Prostate gland (tissue), 2 donors: ENCODE measurements at regions of chr1 and their contacts with region 1.

Region 1: GRCh38 chr1:96538111-96538641 is 183.4 kb upstream of the PTBP2 start:
- DNase-seq: no peak
- H3K4me3 ChIP-seq: no peak overlapping the region
- H3K27ac ChIP-seq: peak overlapping the region; percentile 12 to 58
- H3K4me1 ChIP-seq: no peaks in the 10 kb centered on the region
- H3K27me3 ChIP-seq: no peaks in the 10 kb centered on the region
- CTCF ChIP-seq: no peak
- POLR2A ChIP-seq: no peak

Region 2: GRCh38 chr1:96145492-96145891 is 392.7 kb before region 1 on chr1:
- intact Hi-C with region 1: no loop called
- DNase-seq: no peak
- H3K4me3 ChIP-seq: no peak overlapping the region
- H3K27ac ChIP-seq: no peak overlapping the region
- H3K4me1 ChIP-seq: no peaks in the 10 kb centered on the region
- H3K27me3 ChIP-seq: no peaks in the 10 kb centered on the region
- CTCF ChIP-seq: no peak
- POLR2A ChIP-seq: no peak

Region 3: GRCh38 chr1:96157101-96157500 is 381.1 kb before region 1 on chr1:
- intact Hi-C with region 1: no loop called
- DNase-seq: no peak
- H3K4me3 ChIP-seq: no peak overlapping the region
- H3K27ac ChIP-seq: no peak overlapping the region
- H3K4me1 ChIP-seq: no peaks in the 10 kb centered on the region
- H3K27me3 ChIP-seq: no peaks in the 10 kb centered on the region
- CTCF ChIP-seq: no peak
- POLR2A ChIP-seq: no peak

Region 4: DNA sequence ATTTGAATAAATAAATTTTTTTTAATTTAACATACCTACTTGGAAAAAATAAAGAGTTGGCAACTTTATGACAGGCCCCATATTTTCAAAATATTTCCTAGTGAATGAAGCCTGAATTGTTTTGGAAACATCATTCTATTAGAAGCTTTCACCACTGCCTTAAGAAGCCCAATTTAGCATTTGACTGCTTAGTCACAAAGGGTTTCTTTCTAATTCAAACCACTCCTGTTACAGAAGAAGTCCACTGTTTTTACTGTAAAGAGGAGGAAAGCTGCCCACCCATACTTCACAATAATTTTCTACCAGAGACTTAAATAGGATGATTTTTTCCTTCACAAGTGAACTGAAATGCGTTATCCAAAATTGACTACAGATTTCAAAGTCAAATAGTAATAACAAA is 351.2 kb before region 1 on chr1:
- intact Hi-C with region 1: no loop called
- DNase-seq: no peak
- H3K4me3 ChIP-seq: no peak overlapping the region
- H3K27ac ChIP-seq: no peak overlapping the region
- H3K4me1 ChIP-seq: no peaks in the 10 kb centered on the region
- H3K27me3 ChIP-seq: no peaks in the 10 kb centered on the region
- CTCF ChIP-seq: no peak
- POLR2A ChIP-seq: no peak

Region 5: DNA sequence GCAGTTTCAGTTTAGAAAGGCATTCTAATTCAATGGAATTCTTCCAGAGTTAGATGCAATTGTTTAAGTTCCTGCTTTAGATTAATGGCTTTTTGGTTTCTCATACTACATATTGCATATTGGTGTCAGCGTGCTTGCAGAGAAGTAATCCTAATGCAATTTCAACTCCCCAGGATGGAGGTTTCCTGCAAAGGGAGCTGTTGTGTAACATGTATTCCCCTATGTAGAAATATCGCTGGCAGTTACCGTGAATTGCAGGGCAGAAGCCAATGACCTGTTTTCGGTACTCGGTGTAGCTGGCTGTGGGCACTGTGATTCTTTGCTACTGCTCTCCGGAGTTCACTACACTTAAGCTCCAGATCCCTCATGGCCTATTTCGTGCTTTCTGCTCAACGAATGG is 72.7 kb before region 1 on chr1:
- intact Hi-C with region 1: no loop called
- DNase-seq: no peak
- H3K4me3 ChIP-seq: no peak overlapping the region
- H3K27ac ChIP-seq: no peak overlapping the region
- H3K4me1 ChIP-seq: no peaks in the 10 kb centered on the region
- H3K27me3 ChIP-seq: no peaks in the 10 kb centered on the region
- CTCF ChIP-seq: no peak
- POLR2A ChIP-seq: no peak

Region 6: DNA sequence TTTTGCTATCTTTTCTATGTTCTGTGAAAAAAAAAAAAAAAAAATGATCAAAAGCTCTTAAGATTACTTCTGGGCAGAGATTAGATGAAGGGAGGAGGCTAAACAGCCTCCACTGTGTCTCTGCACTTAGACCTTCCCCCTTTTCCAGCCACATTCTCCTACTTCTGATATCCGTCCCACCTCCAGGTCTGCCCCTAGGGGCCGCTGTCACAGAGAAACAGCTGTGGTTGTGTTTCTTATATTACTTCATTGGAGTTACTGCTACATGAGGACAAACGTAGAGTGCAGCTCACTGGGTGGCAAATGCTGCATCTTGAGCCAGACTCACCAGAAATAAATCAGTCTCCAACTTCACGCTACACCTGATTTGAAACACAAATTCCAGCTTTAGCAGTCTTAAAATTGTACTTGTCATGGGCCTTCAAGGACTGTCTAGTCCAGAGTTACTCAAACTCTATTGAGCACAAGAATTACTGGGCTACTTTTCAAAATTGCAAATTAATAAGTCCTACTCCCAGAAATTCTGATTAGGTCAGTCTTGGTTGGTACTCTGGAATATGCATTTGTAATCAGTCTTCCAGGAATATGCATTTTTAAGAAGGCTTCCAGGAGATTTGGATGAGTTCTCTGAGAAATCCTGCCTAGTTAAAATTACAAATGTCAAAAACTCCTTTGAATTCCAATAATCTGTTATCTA is 58.2 kb after region 1 on chr1:
- intact Hi-C with region 1: loop called (anchors 10 kb)
- DNase-seq: no peak
- H3K4me3 ChIP-seq: no peak overlapping the region
- H3K27ac ChIP-seq: no peak overlapping the region
- H3K4me1 ChIP-seq: no peaks in the 10 kb centered on the region
- H3K27me3 ChIP-seq: no peaks in the 10 kb centered on the region
- CTCF ChIP-seq: no peak
- POLR2A ChIP-seq: no peak

Region 7: GRCh38 chr1:96721416-96722160 is 183.4 kb after region 1 on chr1 and contains the start of gene PTBP2:
- intact Hi-C with region 1: loop called (anchors 10 kb)
- DNase-seq: peak; percentile 68
- H3K4me3 ChIP-seq: peak within 1 kb of the TSS; percentile 68 to 90
- H3K27ac ChIP-seq: peak within 1 kb of the TSS; percentile 93
- H3K4me1 ChIP-seq: no peaks in the 10 kb centered on the region
- H3K27me3 ChIP-seq: no peaks in the 10 kb centered on the region
- CTCF ChIP-seq: no peak
- POLR2A ChIP-seq: no peak
- total RNA-seq, gene PTBP2: 22.0 to 78.8 TPM